Adrenal gland (tissue), 19 donors: ENCODE measurements at regions of chr9 and their contacts with region 1.

Region 1: DNA sequence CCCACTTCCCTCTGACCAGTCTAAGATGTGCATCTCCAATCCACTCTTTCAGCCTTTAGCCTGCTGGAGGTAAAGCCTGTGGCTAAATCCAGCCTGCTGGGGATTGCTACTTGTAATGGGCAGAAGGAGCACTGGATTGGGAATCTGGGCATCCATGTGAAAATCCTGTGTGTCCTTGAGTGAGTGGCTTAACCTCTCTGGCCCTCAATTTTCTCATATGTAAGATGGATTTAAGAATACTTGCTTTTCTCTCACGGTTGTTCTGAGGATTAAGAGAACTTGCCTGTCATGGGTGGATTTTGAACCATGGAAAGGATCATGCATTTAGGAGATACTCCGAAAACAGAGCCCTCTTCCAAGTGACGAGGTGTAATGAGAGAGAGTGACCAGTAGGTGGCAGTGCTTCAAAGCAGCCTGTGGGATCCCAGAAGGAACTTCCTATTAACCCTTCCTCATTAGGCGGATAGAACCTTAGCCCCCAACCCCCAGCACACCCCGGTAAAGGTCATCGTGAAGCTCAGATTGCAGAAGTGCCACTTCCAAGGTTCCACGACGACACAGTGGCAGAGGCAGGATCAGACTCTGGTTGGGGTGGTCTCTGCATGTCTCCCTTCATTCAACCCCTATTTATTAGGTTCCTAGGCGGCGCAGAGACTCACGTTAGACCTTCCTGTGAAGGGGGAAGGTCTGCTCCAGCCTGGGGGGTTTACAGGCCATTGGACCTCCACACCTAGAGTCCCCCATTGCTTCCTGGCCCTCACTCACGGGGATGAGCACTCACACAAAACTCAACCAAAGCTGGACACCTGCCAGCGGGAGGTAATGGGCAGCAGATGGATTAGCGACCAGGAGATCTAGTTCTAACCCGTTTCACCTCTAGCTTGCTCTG is 68.7 kb upstream of the ZNF618 start:
- DNase-seq: peak; percentile 31 to 79 (median 56)
- H3K4me3 ChIP-seq: no peak overlapping the region
- H3K27ac ChIP-seq: no peak overlapping the region
- H3K4me1 ChIP-seq: peaks cover 4 to 15% of the 10 kb centered on the region in 2 donors
- H3K27me3 ChIP-seq: no peaks in the 10 kb centered on the region
- CTCF ChIP-seq: peak; percentile 76 to 93 (median 87)
- POLR2A ChIP-seq: no peak

Region 2: GRCh38 chr9:113734826-113735225 is 72.6 kb before region 1 on chr9:
- intact Hi-C with region 1: no loop called
- DNase-seq: no peak
- H3K4me3 ChIP-seq: no peak overlapping the region
- H3K27ac ChIP-seq: no peak overlapping the region
- H3K4me1 ChIP-seq: no peaks in the 10 kb centered on the region
- H3K27me3 ChIP-seq: no peaks in the 10 kb centered on the region
- CTCF ChIP-seq: no peak
- POLR2A ChIP-seq: no peak

Region 3: DNA sequence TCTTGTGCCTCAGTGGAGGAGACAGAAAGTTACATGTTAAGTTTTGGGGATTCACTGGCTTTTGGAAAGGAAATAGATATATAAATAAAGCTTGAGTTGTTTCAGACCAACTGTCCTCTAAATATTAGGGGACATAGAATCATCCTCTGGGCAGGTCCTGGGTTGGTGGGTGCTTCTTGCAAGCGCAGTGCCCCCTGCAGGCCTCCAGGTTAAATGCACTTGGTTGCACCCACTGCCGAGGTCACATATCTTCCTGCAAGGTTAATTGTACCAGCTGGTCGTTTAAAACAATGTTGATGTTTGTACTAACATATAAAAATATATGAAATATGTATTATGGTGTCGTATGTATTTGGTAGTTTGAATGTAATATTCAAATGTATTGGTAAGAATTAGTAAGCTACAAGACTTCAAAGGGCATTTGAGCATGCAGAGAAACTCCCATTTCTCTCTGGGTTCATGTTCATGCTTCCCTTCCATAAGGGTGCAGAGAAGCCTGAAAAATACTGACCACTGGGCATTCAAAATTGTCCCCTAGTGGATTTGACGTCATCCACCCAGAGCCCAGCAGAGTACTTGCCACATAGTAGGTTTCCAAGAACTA is 155.7 kb after region 1 on chr9:
- intact Hi-C with region 1: loop called in 1 of 2 experiments (anchors 10 kb)
- DNase-seq: peak; percentile 34 to 76 (median 69)
- H3K4me3 ChIP-seq: no peak overlapping the region
- H3K27ac ChIP-seq: no peak overlapping the region
- H3K4me1 ChIP-seq: peaks cover 3 to 20% of the 10 kb centered on the region in 2 donors
- H3K27me3 ChIP-seq: no peaks in the 10 kb centered on the region
- CTCF ChIP-seq: peak; percentile 44 to 75 (median 57)
- POLR2A ChIP-seq: no peak